ENCODE measurements at regions of chr2 and their contacts with region 1.

Region 1: GRCh38 chr2:233854241-233854981 is at the start of gene HJURP:
- DNase-seq: peak; percentile 95 to 97
- ATAC-seq: peak; percentile 88 to 91
- H3K4me3 ChIP-seq: peak within 1 kb of the TSS; percentile 76
- H3K27ac ChIP-seq: peak within 1 kb of the TSS; percentile 85 to 97
- H3K4me1 ChIP-seq: peaks cover 50% of the 10 kb centered on the region
- CTCF ChIP-seq: no peak
- EP300 ChIP-seq: no peak
- POLR2A ChIP-seq: peak; percentile 78
- RAD21 ChIP-seq: no peak
- polyA plus RNA-seq, gene HJURP: 111 and 119 TPM in 2 replicates

Region 2: GRCh38 chr2:233449081-233449901 is 405.1 kb before region 1 on chr2:
- CTCF ChIA-PET with region 1: interaction called, 14 read pairs
- POLR2A ChIA-PET with region 1: no interaction called
- DNase-seq: peak; percentile 68 to 77
- ATAC-seq: peak; percentile 67 to 74
- H3K4me3 ChIP-seq: no peak overlapping the region
- H3K27ac ChIP-seq: peak overlapping the region; percentile 93 to 94
- H3K4me1 ChIP-seq: peaks cover 62% of the 10 kb centered on the region
- CTCF ChIP-seq: peak; percentile 65
- EP300 ChIP-seq: no peak
- POLR2A ChIP-seq: no peak
- RAD21 ChIP-seq: peak; percentile 74 to 79

Region 3: GRCh38 chr2:233912691-233913423 is 58.4 kb after region 1 on chr2:
- CTCF ChIA-PET with region 1: interaction called, 39 read pairs
- POLR2A ChIA-PET with region 1: no interaction called
- DNase-seq: peak; percentile 12 to 27
- ATAC-seq: peak; percentile 72 to 74; a peak in 5 of 6 replicates
- H3K4me3 ChIP-seq: no peak overlapping the region
- H3K27ac ChIP-seq: no peak overlapping the region
- H3K4me1 ChIP-seq: no peaks in the 10 kb centered on the region
- CTCF ChIP-seq: no peak
- EP300 ChIP-seq: no peak
- POLR2A ChIP-seq: no peak
- RAD21 ChIP-seq: no peak

Region 4: GRCh38 chr2:233928594-233929351 is 74.4 kb after region 1 on chr2:
- CTCF ChIA-PET with region 1: interaction called, 10 read pairs
- POLR2A ChIA-PET with region 1: interaction called, 3 read pairs
- DNase-seq: peak; percentile 16 to 55
- ATAC-seq: peak; percentile 44 to 72; a peak in 3 of 6 replicates
- H3K4me3 ChIP-seq: no peak overlapping the region
- H3K27ac ChIP-seq: peak overlapping the region in 1 of 2 experiments; percentile 74; a peak in 4 of 6 replicates
- H3K4me1 ChIP-seq: peaks cover 10% of the 10 kb centered on the region
- CTCF ChIP-seq: peak; percentile 75
- EP300 ChIP-seq: no peak
- POLR2A ChIP-seq: no peak
- RAD21 ChIP-seq: peak; percentile 61 to 66; a peak in 4 of 5 replicates

Region 5: DNA sequence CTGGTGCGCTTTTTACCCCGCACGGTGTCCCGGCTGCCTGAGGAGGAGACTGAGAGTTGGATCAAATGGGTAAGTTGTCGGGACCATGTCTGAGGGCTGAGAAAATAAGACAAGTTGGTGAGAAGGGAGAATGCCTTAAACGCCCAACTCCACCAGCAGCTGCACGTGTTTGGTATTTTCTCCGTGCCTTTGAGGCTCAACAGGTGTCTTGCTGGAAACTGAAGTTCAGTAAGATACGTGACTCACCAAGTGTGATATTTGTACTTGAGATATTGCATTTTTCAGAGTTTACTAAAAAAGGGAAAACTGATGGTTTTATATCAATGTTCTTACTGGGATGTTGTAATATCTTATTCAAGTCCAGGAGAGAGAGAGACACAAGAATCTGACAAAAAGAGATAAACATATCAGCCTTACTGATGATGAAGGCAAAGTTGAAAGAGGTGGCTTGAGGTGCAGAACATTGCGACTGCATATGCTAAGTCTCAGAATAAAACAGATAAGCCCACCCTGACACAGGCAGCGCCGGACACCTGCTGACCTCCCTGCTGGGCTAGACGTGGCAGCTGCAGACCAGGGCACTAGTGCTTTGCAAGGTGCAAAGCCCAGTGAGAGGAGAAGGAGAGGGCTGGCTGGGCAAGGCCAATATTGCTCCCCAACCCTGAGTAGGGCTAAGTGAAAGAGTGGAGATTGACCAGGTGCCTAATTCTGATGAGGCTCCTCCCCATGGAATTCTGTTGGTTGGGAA is 95.8 kb after region 1 on chr2:
- CTCF ChIA-PET with region 1: no interaction called
- POLR2A ChIA-PET with region 1: no interaction called
- DNase-seq: no peak
- ATAC-seq: no peak
- H3K4me3 ChIP-seq: no peak overlapping the region
- H3K27ac ChIP-seq: no peak overlapping the region
- H3K4me1 ChIP-seq: no peaks in the 10 kb centered on the region
- CTCF ChIP-seq: no peak
- EP300 ChIP-seq: no peak
- POLR2A ChIP-seq: no peak
- RAD21 ChIP-seq: no peak

Region 6: DNA sequence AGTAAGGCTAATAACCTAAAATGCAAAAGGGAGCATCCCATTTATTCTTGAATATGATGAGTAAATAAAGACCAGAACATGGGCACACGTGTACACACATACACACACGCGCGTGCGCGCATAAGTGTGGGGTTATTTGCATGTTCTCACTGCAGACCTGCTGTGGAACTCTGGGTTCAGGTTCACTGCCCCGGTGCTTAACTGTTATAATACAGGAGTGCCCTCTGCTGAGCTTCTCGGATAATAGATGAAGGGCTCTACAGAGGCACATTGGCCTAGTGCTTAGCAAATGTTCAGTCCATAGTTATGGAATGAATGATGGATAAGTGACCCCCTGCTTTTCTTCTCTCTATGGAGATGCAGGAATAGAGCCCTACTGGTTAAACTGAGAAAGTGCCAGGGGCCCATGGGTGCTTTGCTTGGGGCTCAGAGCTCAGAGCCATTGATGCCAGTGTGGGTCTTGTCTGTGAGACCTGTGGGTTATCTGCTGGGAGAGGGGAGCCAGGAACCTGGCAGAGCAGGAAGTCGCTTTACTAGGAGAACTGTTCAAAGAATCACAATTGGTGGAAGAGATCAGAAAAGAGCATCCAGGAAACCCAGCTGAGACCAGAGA is 646.1 kb after region 1 on chr2:
- CTCF ChIA-PET with region 1: interaction called, 15 read pairs
- POLR2A ChIA-PET with region 1: interaction called, 4 read pairs
- DNase-seq: peak in 1 of 2 experiments; percentile 83
- ATAC-seq: peak; percentile 45 to 73; a peak in 5 of 6 replicates
- H3K4me3 ChIP-seq: no peak overlapping the region
- H3K27ac ChIP-seq: peak overlapping the region; percentile 55 to 99
- H3K4me1 ChIP-seq: peaks cover 34% of the 10 kb centered on the region
- CTCF ChIP-seq: peak; percentile 87
- EP300 ChIP-seq: no peak
- POLR2A ChIP-seq: no peak
- RAD21 ChIP-seq: peak; percentile 98

Region 7: DNA sequence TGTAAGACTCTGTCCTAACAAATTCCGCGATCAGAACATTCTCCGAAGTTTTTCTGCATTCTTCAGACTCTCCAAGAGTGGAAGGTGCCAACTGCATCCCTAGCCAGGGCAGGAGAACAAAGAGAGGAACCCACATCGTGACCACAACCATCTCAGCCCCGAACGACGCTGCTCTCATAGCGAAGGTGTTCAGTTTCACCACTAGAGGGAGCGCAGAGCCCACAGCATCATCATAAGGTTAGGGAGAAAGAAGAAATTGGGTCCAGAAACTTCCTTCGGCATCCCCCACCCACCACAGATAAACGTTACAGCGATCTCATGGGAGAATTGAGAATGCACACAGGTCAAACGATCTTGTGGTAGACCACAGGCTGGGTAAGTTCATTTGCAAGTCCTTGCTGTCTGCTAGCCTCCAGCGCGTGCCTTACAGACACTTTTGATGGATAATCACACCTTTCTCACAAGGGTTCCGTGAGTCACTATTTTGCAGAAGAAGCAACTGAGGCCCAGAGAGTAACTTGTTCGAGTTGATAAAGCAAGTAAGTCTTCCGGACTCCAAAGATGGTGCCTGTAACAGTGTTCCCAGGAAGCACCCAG is 696.2 kb after region 1 on chr2:
- CTCF ChIA-PET with region 1: interaction called, 42 read pairs
- POLR2A ChIA-PET with region 1: interaction called, 3 read pairs
- DNase-seq: peak; percentile 63 to 74
- ATAC-seq: peak; percentile 93 to 97
- H3K4me3 ChIP-seq: no peak overlapping the region
- H3K27ac ChIP-seq: peak overlapping the region; percentile 52 to 65
- H3K4me1 ChIP-seq: peaks cover 6% of the 10 kb centered on the region; the same call in 2 of the 3 replicates
- CTCF ChIP-seq: peak; percentile 98
- EP300 ChIP-seq: no peak
- POLR2A ChIP-seq: no peak
- RAD21 ChIP-seq: peak; percentile 99 to 100